HepG2 (cell line): ENCODE measurements at regions of chr1 and their contacts with region 1.

Region 1: DNA sequence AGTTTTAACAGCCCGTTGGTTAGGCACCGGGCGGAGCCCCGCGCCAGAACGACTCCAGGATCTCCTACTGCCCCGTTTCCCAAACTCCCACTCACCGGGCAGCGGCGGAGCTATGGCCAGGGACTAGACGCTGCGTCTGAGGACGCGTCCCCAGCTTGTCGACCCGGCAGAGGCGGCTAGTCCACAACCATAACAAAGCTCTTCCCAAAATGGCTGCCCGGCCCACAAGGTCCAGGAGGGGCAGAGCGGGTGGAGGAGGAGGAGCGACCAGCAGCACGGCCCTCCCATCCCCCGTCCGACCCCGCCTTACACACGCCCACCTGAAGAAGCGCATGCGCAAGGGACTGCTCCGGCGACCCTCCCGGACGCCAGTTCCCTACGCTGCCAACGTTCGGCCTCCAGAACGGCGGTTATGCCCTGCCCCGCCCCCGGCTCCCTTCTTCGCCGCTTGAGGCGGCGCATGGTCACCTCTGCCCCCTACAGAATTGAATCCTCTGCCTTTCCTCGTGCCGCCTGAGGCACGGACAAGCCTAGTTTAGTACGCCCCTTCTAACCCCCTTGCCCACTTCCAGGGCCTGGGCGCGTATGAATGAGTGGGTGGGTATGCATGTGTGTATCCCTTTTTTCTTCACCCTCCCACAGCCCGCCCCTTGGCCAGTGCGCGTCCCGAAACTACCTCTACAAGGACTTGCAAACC is at the start of gene GPBP1L1:
- DNase-seq: peak; percentile 91
- ATAC-seq: peak; percentile 81
- H3K4me3 ChIP-seq: peak within 1 kb of the TSS; percentile 83 to 98 (median 93)
- H3K27ac ChIP-seq: peak within 1 kb of the TSS; percentile 99
- H3K4me1 ChIP-seq: peaks cover 49% of the 10 kb centered on the region
- H3K27me3 ChIP-seq: peaks cover 0 to 5% of the 10 kb centered on the region in 2 experiments; a peak in 2 of 5 replicates
- CTCF ChIP-seq: no peak
- EP300 ChIP-seq: no peak
- POLR2A ChIP-seq: peak; percentile 69 to 89
- RAD21 ChIP-seq: 0 out of 2 replicates have a peak, but pooled peaks have one; percentile 42
- total RNA-seq, gene GPBP1L1: 86.1 and 102 TPM in 2 replicates

Region 2: DNA sequence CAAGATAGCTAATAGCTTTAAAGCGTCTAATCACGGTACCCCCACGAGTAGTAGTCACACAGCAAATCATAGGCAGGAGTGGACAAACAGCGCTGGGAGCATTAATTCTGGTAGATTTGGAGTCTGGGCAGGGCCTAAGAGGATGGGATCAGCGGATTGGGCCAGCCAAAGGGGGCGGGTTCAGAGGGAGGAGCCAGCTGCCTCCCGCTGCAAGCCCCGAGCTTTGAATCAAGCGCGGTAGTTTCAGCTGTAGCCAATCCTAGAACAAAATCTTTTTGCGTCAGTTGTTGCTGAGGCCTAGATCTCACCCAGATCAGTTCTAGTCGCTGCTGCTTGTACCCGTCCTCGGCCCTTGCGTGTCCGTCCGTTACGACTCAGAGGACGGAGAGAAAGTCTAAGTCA is 103.2 kb before region 1 on chr1:
- CTCF ChIA-PET with region 1: no interaction called
- POLR2A ChIA-PET with region 1: interaction called, 13 read pairs
- in situ Hi-C with region 1: no loop called
- intact Hi-C with region 1: no loop called
- DNase-seq: peak; percentile 95
- ATAC-seq: peak; percentile 90
- H3K4me3 ChIP-seq: peak overlapping the region; percentile 90 to 96 (median 95)
- H3K27ac ChIP-seq: peak overlapping the region; percentile 98
- H3K4me1 ChIP-seq: peaks cover 32% of the 10 kb centered on the region
- H3K27me3 ChIP-seq: no peaks in the 10 kb centered on the region; a peak in 2 of 5 replicates
- CTCF ChIP-seq: no peak
- EP300 ChIP-seq: no peak
- POLR2A ChIP-seq: no peak
- RAD21 ChIP-seq: no peak

Region 3: DNA sequence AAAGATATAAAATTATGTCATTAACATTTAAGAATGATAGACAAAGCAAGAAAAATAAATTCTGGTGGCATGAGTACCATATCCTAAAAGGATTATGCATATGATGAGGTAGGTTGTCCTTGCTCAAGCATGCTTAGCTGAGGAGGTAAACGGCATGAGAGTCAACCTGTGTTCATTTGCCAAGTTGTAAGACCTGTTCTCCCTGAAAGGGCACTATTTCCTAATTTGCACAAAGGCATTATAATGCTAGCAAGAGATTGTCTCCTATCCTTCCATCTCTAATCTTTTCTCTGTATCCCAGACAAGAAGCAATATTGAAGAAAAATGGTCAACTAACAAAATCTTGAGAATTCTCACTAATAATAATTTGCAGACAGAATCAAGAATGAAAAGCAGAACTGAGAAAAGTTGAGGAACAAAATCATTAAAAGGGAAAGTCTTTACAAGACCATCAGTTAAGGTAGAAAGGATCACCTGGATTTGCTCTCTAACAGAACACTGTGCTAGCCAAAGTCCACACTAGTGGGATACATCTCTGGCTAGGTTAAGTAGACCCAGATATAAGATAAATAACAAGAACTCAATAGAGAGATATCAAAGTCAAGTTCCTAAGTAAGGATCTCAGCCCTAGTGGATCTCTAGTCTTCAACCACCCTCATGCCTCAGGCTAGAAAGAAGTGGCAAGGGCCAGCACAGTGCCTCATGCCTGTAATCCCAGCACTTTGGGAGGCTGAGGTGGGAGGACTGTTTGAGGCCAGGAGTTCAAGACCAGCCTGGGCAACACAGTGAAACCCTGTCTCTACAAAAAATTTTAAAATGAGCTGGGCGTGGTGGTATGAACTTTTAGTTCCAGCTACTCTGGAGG is 44.2 kb after region 1 on chr1:
- CTCF ChIA-PET with region 1: no interaction called
- POLR2A ChIA-PET with region 1: no interaction called
- in situ Hi-C with region 1: no loop called
- intact Hi-C with region 1: no loop called
- DNase-seq: no peak
- ATAC-seq: no peak
- H3K4me3 ChIP-seq: no peak overlapping the region
- H3K27ac ChIP-seq: no peak overlapping the region
- H3K4me1 ChIP-seq: no peaks in the 10 kb centered on the region
- H3K27me3 ChIP-seq: no peaks in the 10 kb centered on the region
- CTCF ChIP-seq: no peak
- EP300 ChIP-seq: no peak
- POLR2A ChIP-seq: no peak
- RAD21 ChIP-seq: no peak

Region 4: DNA sequence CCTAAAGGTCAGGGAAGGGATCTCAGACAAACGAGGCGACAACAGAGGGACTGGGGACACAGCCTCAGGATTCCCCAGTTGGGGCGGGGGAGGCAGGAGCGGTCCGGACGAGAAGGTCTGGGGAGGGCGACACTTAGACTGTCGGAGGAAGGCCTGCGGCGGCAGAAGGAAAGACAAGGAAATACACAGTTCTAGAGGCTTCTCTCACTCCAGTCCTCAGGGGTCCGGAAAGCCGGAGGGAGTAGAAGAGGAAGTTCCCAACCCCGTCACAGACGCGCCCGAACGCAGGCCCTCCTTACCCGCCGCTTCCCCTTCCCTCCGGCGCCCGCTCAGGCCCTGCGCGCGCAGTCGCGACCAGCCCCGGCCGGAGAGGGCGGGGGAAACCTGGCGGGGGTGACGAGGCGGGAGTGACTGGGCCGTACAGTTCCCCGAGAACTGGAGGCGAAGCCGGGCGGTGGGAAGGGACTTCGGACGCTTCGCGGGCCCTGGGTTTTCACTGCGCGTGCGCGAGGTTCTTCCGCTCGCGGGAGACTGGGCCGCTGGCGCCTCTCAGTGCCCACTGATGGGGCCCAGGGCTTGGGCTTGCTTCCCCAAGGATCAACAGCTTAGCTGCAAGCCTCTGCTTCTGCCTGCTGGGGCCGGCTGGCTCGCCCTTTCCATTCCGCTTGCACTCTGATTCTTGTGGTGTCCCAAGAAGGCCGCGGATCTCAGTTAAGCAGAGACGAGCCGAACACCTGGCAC is 64.0 kb after region 1 on chr1 and contains the start of gene IPP:
- CTCF ChIA-PET with region 1: no interaction called
- POLR2A ChIA-PET with region 1: interaction called, 11 read pairs
- in situ Hi-C with region 1: no loop called
- intact Hi-C with region 1: loop called (anchors 5 kb)
- DNase-seq: peak; percentile 95
- ATAC-seq: peak; percentile 93
- H3K4me3 ChIP-seq: peak within 1 kb of the TSS; percentile 72 to 86 (median 79)
- H3K27ac ChIP-seq: peak within 1 kb of the TSS; percentile 97
- H3K4me1 ChIP-seq: peaks cover 51% of the 10 kb centered on the region
- H3K27me3 ChIP-seq: no peaks in the 10 kb centered on the region
- CTCF ChIP-seq: peak; percentile 81
- EP300 ChIP-seq: peak in 1 of 2 experiments; percentile 27; a peak in 2 of 4 replicates
- POLR2A ChIP-seq: peak; percentile 94 to 95
- RAD21 ChIP-seq: peak; percentile 79
- total RNA-seq, gene IPP: 9.7 and 14.1 TPM in 2 replicates

Region 5: DNA sequence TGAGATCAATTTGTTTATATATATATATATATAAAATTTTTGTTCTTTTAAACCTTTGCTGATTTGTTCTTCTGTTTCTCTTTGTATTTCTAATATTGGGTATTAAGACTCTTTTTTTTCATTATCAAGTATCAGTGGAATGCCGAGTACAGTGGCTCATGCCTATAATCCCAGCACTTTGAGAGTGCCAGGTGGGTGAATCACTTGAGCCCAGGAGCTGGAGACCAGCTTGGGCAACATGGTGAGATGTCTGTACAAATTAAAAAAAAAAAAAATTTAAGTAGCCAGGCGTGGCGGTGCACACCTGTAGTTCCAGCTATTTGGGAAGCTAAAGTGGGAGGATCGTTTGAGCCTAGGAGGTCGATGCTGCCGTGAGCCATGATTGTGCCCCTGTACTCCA is 184.0 kb after region 1 on chr1:
- CTCF ChIA-PET with region 1: no interaction called
- POLR2A ChIA-PET with region 1: interaction called, 10 read pairs
- in situ Hi-C with region 1: no loop called
- intact Hi-C with region 1: loop called (anchors 1 kb)
- DNase-seq: no peak
- ATAC-seq: no peak
- H3K4me3 ChIP-seq: peak overlapping the region in 1 of 3 experiments; percentile 16; a peak in 1 of 6 replicates
- H3K27ac ChIP-seq: peak overlapping the region; percentile 97
- H3K4me1 ChIP-seq: peaks cover 88% of the 10 kb centered on the region
- H3K27me3 ChIP-seq: no peaks in the 10 kb centered on the region
- CTCF ChIP-seq: no peak
- EP300 ChIP-seq: no peak
- POLR2A ChIP-seq: no peak
- RAD21 ChIP-seq: no peak

Region 6: DNA sequence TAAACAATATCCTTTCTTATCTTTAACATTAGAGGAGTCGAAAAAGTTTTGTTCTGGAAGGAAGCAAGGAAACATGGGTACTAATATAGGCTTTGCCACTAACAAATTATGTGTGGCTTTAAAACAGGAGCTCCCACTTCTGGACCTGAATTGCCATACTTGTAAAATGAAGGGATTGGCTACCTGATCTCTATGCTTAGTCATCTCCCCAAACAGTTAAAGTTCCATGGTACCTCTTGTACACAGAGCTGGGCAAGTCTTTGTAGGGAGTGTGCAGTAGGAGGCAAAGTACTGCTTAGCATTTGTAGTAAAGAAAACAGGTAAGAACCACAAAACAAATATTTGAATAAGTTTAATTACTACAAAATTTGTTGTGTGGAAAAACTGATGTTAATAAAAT is 198.2 kb after region 1 on chr1:
- CTCF ChIA-PET with region 1: no interaction called
- POLR2A ChIA-PET with region 1: interaction called, 4 read pairs
- in situ Hi-C with region 1: no loop called
- intact Hi-C with region 1: loop called (anchors 5 kb)
- DNase-seq: peak; percentile 62
- ATAC-seq: peak; percentile 73
- H3K4me3 ChIP-seq: no peak overlapping the region
- H3K27ac ChIP-seq: peak overlapping the region; percentile 52
- H3K4me1 ChIP-seq: peaks cover 37% of the 10 kb centered on the region
- H3K27me3 ChIP-seq: no peaks in the 10 kb centered on the region
- CTCF ChIP-seq: no peak; the same call in 1 of the 2 replicates
- EP300 ChIP-seq: peak in 1 of 2 experiments; percentile 52; a peak in 1 of 4 replicates
- POLR2A ChIP-seq: no peak
- RAD21 ChIP-seq: no peak